ENCODE measurements at regions of chr17 and their contacts with region 1.

Region 1: DNA sequence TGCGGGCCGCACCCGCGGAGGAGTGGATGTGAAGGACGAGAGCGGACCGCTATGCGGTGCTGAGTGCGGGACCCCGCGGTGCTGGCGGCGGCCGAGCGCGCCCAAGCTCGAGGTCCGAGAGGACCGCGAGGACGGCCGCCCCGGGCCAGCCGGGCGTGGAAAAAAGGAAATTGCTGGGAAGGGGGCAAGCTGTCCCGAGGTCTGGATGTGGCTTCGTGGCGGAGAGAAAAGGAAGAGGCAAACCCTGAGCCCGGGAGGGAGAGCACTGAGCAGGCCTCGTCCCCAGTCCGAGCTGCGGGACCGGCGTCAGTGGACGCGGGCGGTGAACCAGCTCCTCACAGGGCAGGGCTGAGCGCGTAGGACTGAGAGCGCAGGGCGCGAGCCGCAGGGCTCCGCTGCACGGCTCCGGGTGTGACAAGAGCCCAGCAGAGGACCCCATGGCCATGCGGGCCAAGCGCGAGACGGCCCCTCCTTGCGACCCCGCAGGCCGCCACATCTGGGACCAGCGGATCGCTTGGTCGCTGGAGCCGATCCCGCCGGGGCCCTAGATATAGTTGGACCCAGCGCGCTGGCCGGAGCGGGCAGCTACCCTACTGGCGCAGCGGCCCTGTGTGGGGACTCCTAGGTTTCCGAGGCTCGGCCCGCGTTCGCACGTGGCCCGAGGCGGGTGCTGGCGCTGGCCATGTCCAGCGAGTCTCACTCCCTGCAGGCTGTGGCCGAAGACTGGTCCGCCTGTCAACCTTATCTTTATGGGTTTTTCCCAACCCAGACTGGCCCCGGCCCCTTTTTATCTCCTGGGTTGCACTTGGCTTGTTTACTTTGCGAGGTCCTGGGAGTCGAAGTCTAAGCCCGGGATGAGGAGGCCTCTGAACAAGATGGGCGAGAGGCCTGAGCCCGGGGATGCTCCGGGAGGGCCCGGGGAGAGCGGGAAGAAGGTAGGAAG is 2.4 kb downstream of the TBX4 start:
- DNase-seq: no peak
- H3K4me3 Mint-ChIP-seq: no peak overlapping the region
- H3K27ac Mint-ChIP-seq: no peak overlapping the region
- H3K4me1 Mint-ChIP-seq: peaks cover 33% of the 10 kb centered on the region
- H3K27me3 Mint-ChIP-seq: peaks cover 68% of the 10 kb centered on the region

Region 2: GRCh38 chr17:61402978-61403800 is 51.5 kb before region 1 on chr17:
- CTCF ChIA-PET with region 1: interaction called, 3 read pairs
- POLR2A ChIA-PET with region 1: interaction called, 3 read pairs
- intact Hi-C with region 1: loop called (anchors 2 kb)
- DNase-seq: peak; percentile 36
- H3K4me3 Mint-ChIP-seq: peak overlapping the region; percentile 46
- H3K27ac Mint-ChIP-seq: no peak overlapping the region
- H3K4me1 Mint-ChIP-seq: peaks cover 35% of the 10 kb centered on the region
- H3K27me3 Mint-ChIP-seq: peaks cover 64% of the 10 kb centered on the region

Region 3: GRCh38 chr17:61627125-61627524 is 172.5 kb after region 1 on chr17:
- CTCF ChIA-PET with region 1: no interaction called
- POLR2A ChIA-PET with region 1: no interaction called
- intact Hi-C with region 1: no loop called
- DNase-seq: no peak
- H3K4me3 Mint-ChIP-seq: no peak overlapping the region
- H3K27ac Mint-ChIP-seq: no peak overlapping the region
- H3K4me1 Mint-ChIP-seq: no peaks in the 10 kb centered on the region
- H3K27me3 Mint-ChIP-seq: peaks cover 26% of the 10 kb centered on the region

Measured in activated CD4-positive, alpha-beta memory T cell treated with anti-CD3 and anti-CD28 coated beads for 36 hours (primary cell).